K562 (cell line): ENCODE measurements at regions of chr6 and their contacts with region 1.

Region 1: GRCh38 chr6:73520688-73521350 is at the start of gene EEF1A1:
- DNase-seq: peak; percentile 78 to 99 (median 86)
- ATAC-seq: peak; percentile 75
- H3K4me3 ChIP-seq: peak within 1 kb of the TSS; percentile 80
- H3K27ac ChIP-seq: peak within 1 kb of the TSS; percentile 96
- H3K4me1 ChIP-seq: peaks cover 2 to 6% of the 10 kb centered on the region in 2 experiments; a peak in 3 of 5 replicates
- H3K27me3 ChIP-seq: no peaks in the 10 kb centered on the region
- CTCF ChIP-seq: no peak
- EP300 ChIP-seq: peak; percentile 9
- POLR2A ChIP-seq: peak; percentile 100
- RAD21 ChIP-seq: peak; percentile 7 to 16; a peak in 1 of 4 replicates
- polyA plus RNA-seq, gene EEF1A1: 6,453 to 7,909 TPM

Region 2: DNA sequence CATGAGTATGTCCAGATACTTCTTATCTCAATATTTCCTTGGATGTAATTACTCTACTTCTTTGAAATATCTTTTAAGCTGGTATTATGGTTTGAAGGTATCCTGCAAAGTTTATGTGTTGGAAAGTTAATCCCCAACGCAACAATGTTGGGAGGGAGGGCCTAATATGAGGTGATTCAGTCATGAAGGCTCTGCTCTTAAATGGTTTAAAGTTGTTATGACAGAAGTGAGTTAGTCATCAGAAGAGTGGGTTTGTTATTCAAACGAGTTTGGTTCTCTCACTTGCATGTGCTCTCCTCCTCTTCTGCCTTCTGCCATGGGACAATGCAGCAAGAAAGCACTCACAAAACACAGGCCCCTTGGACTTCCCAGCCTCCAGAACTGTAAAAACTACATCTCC is 722.6 kb before region 1 on chr6:
- CTCF ChIA-PET with region 1: no interaction called
- POLR2A ChIA-PET with region 1: no interaction called
- in situ Hi-C with region 1: no loop called
- intact Hi-C with region 1: no loop called
- DNase-seq: no peak
- ATAC-seq: no peak
- H3K4me3 ChIP-seq: no peak overlapping the region
- H3K27ac ChIP-seq: no peak overlapping the region
- H3K4me1 ChIP-seq: no peaks in the 10 kb centered on the region
- H3K27me3 ChIP-seq: no peaks in the 10 kb centered on the region
- CTCF ChIP-seq: no peak
- EP300 ChIP-seq: no peak
- POLR2A ChIP-seq: no peak
- RAD21 ChIP-seq: no peak

Region 3: GRCh38 chr6:73461537-73462350 is 59.1 kb before region 1 on chr6 and contains the start of gene MTO1:
- CTCF ChIA-PET with region 1: no interaction called
- POLR2A ChIA-PET with region 1: interaction called, 15 read pairs
- in situ Hi-C with region 1: no loop called
- intact Hi-C with region 1: no loop called
- DNase-seq: peak; percentile 89 to 96 (median 92)
- ATAC-seq: peak; percentile 94
- H3K4me3 ChIP-seq: peak within 1 kb of the TSS; percentile 95
- H3K27ac ChIP-seq: peak within 1 kb of the TSS; percentile 99
- H3K4me1 ChIP-seq: no peaks in the 10 kb centered on the region; a peak in 3 of 5 replicates
- H3K27me3 ChIP-seq: no peaks in the 10 kb centered on the region
- CTCF ChIP-seq: no peak
- EP300 ChIP-seq: 0 out of 2 replicates have a peak, but pooled peaks have one; percentile 12
- POLR2A ChIP-seq: peak; percentile 94
- RAD21 ChIP-seq: 0 out of 4 replicates have a peak, but pooled peaks of 1 of the 2 experiments have one; percentile 9
- polyA plus RNA-seq, gene MTO1: 33.4 to 55.1 TPM

Region 4: DNA sequence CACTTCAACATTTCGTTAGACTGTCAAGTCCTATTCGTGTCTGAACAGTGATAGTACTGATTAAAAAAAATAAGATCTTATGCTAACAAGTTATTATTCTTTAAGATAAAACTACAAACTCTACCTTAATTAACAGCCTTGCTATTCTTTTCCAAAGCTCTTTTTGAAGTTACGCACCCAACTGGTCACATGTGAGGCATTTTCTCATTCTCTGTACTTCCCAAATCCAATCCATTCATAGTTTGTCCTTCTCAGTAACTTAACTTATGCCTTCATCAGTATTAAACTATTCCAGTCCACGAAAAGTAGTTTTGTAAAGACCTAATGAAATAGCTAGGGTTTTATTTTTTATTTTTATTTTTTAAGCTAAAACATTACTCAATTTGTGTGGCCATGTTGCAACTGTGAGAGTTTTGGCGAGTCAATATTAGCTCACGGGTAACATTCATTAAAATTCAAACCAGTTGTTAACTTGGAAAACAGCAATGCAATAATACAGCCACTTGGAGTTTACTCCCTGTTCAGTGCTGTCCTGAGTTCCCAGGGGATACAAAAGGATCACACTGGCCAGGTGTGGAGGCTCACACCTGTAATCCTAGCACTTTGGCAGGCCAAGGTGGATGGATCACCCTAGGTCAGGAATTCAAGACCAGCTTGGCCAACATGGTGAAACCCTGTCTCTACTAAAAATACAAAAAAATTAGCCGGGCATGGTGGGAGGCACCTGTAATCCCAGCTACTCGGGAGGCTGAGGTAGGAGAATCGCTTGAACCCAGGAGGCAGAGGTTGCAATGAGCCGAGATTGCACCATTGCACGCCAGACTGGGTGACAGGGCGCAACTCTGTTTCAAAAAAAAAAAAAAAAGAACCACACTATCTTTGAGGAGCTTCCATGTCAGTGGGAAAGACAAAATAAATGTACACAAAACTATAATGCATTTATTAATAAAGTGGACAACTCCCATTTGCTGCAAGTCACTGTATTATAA is 27.9 kb after region 1 on chr6:
- CTCF ChIA-PET with region 1: no interaction called
- POLR2A ChIA-PET with region 1: interaction called, 29 read pairs
- in situ Hi-C with region 1: no loop called
- intact Hi-C with region 1: no loop called
- DNase-seq: no peak
- ATAC-seq: peak; percentile 80
- H3K4me3 ChIP-seq: no peak overlapping the region
- H3K27ac ChIP-seq: no peak overlapping the region
- H3K4me1 ChIP-seq: no peaks in the 10 kb centered on the region; a peak in 1 of 5 replicates
- H3K27me3 ChIP-seq: no peaks in the 10 kb centered on the region
- CTCF ChIP-seq: peak in 2 of 3 experiments; percentile 28 to 46; a peak in 2 of 6 replicates
- EP300 ChIP-seq: no peak
- POLR2A ChIP-seq: no peak
- RAD21 ChIP-seq: no peak; a peak in 1 of 4 replicates

Region 5: DNA sequence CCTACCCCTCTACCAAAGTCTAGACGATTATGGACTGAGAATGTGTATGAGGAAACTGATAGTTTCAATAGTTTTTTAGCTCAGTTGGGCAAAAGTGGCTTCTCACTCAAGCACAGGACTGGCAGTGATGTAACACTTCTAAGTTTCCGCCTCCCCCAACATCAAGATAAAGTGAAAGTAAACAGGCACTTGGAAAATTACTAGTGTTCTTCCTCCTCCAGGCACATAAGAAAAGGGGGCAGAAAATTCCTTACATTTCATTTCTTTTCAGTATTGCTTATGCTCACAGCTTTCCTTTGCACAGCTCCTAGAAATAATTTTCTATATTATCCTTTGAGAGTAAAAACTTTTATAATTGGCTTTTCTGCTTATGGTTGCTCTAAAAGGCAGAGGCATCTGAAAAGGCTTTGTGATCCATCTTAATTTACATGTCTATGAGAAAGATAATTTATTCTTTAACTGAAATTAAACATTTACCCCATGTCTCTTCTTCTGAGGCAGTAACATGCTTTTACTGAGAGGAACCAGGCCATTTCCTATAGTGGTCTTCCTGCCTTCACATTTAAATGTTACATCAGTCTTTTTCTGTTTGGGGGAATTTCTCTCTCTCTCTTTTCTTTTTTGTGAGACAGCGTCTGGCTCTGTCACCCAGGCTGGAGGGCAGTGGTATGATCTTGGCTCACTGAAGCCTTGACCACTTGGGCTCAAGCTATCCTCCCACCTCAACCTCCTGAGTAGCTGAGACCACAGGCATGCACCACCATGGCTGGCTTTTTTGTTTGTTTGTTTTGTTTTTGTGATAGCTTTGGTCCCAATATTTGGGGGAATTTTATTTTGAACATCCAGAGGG is 65.0 kb after region 1 on chr6:
- CTCF ChIA-PET with region 1: no interaction called
- POLR2A ChIA-PET with region 1: interaction called, 38 read pairs
- in situ Hi-C with region 1: loop called (anchors 5 kb)
- intact Hi-C with region 1: loop called (anchors 1 kb)
- DNase-seq: peak; percentile 44 to 81 (median 58)
- ATAC-seq: peak; percentile 83
- H3K4me3 ChIP-seq: no peak overlapping the region
- H3K27ac ChIP-seq: peak overlapping the region; percentile 82
- H3K4me1 ChIP-seq: peaks cover 7 to 15% of the 10 kb centered on the region in 2 experiments; a peak in 4 of 5 replicates
- H3K27me3 ChIP-seq: no peaks in the 10 kb centered on the region
- CTCF ChIP-seq: no peak
- EP300 ChIP-seq: peak; percentile 75
- POLR2A ChIP-seq: no peak
- RAD21 ChIP-seq: 0 out of 4 replicates have a peak, but pooled peaks of 1 of the 2 experiments have one; percentile 5

Region 6: GRCh38 chr6:73631849-73632248 is 111.0 kb after region 1 on chr6:
- CTCF ChIA-PET with region 1: no interaction called
- POLR2A ChIA-PET with region 1: interaction called, 26 read pairs
- in situ Hi-C with region 1: no loop called
- intact Hi-C with region 1: no loop called
- DNase-seq: no peak
- ATAC-seq: no peak
- H3K4me3 ChIP-seq: no peak overlapping the region
- H3K27ac ChIP-seq: no peak overlapping the region
- H3K4me1 ChIP-seq: no peaks in the 10 kb centered on the region
- H3K27me3 ChIP-seq: no peaks in the 10 kb centered on the region
- CTCF ChIP-seq: no peak
- EP300 ChIP-seq: no peak
- POLR2A ChIP-seq: no peak
- RAD21 ChIP-seq: no peak